ENCODE measurements at regions of chr3 and their contacts with region 1.

Region 1: GRCh38 chr3:16759227-16759903 is 125.4 kb upstream of the PLCL2 start:
- DNase-seq: no peak
- H3K4me3 Mint-ChIP-seq: no peak overlapping the region
- H3K27ac Mint-ChIP-seq: no peak overlapping the region
- H3K4me1 Mint-ChIP-seq: no peaks in the 10 kb centered on the region
- H3K27me3 Mint-ChIP-seq: no peaks in the 10 kb centered on the region

Region 2: DNA sequence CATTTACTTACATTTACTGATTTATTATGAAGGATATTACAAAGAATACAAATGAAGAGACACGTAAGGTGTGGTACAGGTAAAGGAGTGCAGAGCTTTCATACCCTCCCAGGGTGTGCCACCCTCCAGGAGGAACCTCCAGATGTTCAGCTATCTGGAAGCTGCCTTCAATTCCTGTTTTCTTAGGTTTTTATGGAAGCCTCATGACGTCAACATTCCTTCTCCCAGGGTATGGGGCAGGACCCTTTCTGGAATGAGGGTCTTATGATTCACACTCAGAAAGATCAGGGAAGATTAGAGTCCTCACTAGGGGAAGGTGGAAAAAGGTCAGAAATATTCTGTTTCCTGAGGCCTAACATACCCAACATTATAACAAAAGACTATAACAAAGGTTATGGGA is 25.6 kb after region 1 on chr3:
- intact Hi-C with region 1: loop called (anchors 1 kb)
- DNase-seq: no peak
- H3K4me3 Mint-ChIP-seq: no peak overlapping the region
- H3K27ac Mint-ChIP-seq: no peak overlapping the region
- H3K4me1 Mint-ChIP-seq: no peaks in the 10 kb centered on the region
- H3K27me3 Mint-ChIP-seq: peaks cover 4% of the 10 kb centered on the region

Region 3: GRCh38 chr3:16982460-16982859 is 223.1 kb after region 1 on chr3:
- intact Hi-C with region 1: no loop called
- DNase-seq: no peak
- H3K4me3 Mint-ChIP-seq: no peak overlapping the region
- H3K27ac Mint-ChIP-seq: no peak overlapping the region
- H3K4me1 Mint-ChIP-seq: no peaks in the 10 kb centered on the region
- H3K27me3 Mint-ChIP-seq: no peaks in the 10 kb centered on the region